HEK293T (cell line): ENCODE measurements at regions of chr20 and their contacts with region 1.

Region 1: DNA sequence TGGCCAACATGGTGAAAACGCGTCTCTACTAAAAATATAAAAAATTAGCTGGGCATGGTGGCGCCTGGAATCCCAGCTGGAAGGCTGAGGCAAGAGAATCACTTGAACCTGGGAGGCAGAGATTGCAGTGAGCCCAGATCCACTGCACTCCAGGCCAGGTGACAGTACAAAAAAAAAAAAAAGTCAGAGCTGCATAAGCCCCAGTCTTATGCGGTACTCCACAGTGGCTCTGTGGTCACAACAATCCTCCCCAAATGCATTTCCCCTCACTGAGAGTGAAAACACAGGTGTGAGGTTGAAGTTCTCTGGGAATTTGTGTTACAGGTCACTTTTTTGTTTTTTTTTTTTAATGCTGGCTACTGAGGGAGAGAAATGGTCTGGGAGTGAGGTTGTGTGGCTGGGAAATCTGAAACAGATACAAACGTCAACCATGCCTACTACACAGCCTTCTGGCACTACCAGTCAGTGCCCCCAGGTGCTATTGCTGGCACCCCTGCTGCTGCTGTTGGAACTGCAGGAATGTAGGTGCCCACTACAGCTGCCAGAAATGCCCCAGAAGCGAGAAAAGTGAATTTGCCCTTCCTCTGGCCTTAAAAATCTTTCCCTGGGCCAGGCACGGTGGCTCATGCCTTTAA is 5.7 kb downstream of the MRPS26 start:
- DNase-seq: no peak

Region 2: DNA sequence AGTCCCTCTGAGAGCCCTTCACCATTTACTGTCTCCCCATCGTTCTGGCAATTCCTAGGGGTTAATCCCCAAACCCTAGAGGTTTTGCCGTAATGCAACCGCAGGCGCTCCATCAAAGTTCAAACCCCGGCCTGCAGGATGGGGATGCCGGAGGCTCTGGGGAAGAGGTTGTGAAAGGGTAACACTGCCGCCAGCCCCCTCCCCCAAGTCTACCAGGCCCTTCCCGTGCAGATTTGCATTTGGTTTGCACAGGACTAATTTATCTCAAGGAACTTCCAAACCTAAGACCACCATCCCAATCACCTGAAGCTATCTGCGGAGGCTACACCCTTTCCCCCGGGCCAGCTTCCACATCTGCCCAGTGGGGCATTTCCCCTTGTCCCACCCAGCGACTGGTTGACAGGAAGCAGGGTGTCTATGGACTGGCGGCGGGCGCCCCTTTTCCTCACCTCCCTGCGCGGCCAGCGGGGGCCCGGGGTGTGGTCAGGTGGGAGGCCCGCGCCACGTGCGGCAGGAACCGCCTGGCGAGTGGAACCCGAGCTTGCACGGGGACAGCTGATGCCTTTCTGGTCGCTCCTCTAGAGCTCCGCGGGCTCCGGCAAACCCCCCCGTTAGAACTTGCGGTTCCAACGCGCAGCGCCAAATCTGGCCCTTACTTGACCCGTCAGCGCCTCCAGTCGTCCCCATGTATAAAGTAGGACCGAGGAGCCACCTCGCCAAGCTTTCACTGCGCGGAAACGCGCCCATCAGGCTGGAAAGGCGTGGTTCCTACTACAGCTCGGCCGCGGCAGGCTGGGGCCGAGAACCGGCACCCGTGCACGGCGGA is 196.9 kb after region 1 on chr20:
- CTCF ChIA-PET with region 1: interaction called, 10 read pairs
- POLR2A ChIA-PET with region 1: no interaction called
- DNase-seq: no peak